GM10248 (cell line): ENCODE measurements at regions of chr1 and their contacts with region 1.

Region 1: GRCh38 chr1:92749024-92749634 is 35.8 kb downstream of the EVI5 start:
- DNase-seq: peak; percentile 68
- CTCF ChIP-seq: peak; percentile 60

Region 2: DNA sequence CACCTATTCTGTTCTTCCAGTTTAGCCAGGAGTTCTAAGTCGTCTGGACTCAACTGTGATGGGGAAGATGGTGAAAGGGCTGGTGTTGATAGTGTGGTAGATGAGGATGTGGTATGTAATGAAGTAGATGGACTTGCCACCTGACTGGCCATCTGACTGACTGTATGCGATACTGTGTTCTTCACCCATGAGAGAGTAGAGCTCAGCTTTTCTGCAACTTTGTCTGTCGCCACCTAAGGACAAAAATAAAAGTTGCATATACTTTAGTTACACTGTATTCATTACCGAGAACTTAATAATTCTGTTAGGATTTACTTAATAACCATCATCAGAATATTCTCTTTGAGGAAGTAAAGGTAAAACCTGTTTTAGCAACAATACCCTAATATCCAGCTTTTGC is 12.7 kb before region 1 on chr1:
- CTCF ChIA-PET with region 1: interaction called, 29 read pairs
- POLR2A ChIA-PET with region 1: no interaction called
- DNase-seq: no peak
- CTCF ChIP-seq: peak; percentile 18

Region 3: DNA sequence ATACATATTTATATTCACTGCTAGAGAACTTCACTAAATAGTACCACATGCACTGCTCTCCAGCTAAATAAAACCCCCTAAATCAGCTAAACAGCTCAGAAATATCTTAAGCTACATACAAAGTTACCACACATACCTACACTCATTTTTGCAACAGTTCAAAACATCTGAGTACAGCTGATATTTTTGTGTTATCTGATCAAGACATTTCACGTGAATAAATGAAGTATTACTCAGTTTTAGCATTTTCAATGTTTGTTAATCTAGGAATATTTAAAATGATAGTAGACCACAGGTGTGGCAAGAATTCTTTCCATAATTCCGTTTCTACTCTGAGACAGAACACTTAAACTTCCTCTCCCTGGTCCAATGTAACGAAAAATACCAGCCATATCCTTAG is 15.0 kb after region 1 on chr1:
- CTCF ChIA-PET with region 1: interaction called, 16 read pairs
- POLR2A ChIA-PET with region 1: no interaction called
- DNase-seq: no peak
- CTCF ChIP-seq: no peak

Region 4: GRCh38 chr1:92774407-92774806 is 25.3 kb after region 1 on chr1:
- CTCF ChIA-PET with region 1: interaction called, 11 read pairs
- POLR2A ChIA-PET with region 1: no interaction called
- DNase-seq: no peak
- CTCF ChIP-seq: no peak

Region 5: DNA sequence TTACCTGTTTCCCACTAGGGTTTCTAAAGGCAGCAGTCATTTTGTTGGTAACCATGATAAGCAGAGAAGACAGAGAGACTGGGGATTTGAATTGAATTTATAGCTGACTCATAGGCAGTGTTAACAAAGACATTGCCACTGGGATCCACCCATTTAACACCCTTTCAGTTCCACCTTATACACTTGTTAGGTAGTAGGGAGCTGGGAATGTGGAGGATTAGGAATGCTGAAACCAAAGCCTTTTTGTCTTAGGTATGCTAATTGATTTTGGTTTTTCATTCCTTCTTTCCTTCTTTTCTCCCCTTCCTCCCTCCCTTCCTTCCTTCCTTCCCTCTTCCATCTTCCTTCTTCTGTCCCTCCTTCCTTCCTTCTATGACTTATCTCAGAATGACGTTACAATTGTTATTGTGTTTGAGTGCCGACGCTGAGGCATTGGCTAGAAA is 43.2 kb after region 1 on chr1:
- CTCF ChIA-PET with region 1: interaction called, 12 read pairs
- POLR2A ChIA-PET with region 1: no interaction called
- DNase-seq: no peak
- CTCF ChIP-seq: no peak

Region 6: GRCh38 chr1:92817986-92818764 is 69.0 kb after region 1 on chr1:
- CTCF ChIA-PET with region 1: interaction called, 66 read pairs
- POLR2A ChIA-PET with region 1: no interaction called
- DNase-seq: peak; percentile 46
- CTCF ChIP-seq: peak; percentile 82

Region 7: DNA sequence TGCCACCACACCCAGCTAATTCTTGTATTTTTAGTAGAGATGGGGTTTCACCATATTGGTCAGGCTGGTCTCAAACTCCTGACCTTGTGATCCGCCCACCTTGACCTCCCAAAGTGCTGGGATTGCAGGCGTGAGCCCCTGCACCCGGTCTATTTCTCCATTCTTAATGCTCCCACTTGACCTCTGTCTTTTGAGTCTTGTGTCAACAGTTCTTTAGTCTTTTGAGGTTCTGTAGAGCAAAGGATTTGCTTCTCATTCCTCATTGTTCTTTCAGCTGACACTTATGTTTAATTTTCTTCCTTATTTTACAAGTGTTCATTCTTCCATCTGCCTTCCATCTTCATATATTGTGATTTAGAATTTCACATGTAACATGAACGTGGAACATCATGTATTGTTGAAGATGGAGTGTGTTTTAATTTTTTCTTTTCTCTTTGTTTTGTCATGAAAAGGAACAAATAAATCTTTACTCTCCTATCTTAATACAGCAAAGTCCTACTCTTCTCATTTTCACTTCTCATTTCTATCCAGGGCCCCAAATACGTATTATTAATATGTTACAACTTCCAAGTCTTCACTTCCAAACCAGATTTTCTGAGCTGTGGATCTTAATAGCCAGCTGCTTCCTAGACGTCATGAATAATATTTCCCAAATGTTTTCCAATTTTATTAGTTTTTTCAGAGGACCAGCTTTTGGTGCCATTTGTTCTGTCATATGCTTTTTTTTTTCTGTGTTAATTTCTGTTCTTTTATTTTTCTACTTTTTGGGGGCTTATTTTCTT is 346.9 kb after region 1 on chr1:
- CTCF ChIA-PET with region 1: no interaction called
- POLR2A ChIA-PET with region 1: no interaction called
- DNase-seq: no peak
- CTCF ChIP-seq: no peak